SK-N-SH (cell line): ENCODE measurements at regions of chrX and their contacts with region 1.

Region 1: GRCh38 chrX:19017271-19017670 is 33.4 kb upstream of the PHKA2 start:
- DNase-seq: peak; percentile 73
- H3K4me3 ChIP-seq: no peak overlapping the region
- H3K27ac ChIP-seq: no peak overlapping the region
- H3K4me1 ChIP-seq: no peaks in the 10 kb centered on the region
- H3K27me3 ChIP-seq: no peaks in the 10 kb centered on the region
- CTCF ChIP-seq: peak; percentile 69
- EP300 ChIP-seq: no peak
- RAD21 ChIP-seq: peak; percentile 78

Region 2: DNA sequence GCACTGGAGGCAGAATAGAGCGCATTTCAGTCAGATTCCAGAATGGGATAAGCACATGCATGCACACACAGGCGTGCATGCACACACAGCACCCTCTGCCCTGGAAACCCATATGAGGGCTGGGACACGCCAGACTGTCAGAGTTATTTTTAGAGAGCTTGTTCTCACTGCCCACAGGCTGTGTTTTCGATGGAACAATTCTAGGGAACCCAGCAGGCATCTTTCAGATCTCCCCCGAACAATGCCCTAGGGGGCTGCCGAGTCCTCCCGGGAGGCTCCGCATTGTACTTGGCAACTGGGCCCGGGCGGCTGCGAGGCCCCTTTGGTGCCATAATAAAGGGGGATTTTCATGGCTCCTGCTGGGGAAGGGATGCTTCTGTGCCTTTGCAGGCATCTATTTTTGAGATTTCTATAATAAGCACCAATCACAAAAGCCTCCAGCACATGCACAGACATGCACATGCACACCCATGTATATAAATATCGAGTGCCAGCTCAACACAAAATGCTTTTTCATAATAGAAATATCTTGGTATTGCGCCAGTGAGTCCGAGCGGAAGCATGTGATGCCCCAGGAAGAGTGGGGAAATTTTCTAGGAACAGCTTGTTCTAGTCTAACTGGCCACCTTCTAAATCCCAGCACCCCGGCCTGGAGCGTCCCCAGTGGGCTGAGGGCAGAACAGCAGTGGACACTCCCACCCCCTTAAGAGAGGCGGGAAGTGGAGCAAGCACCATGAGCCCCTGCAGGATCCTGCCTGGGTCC is 121.9 kb before region 1 on chrX:
- CTCF ChIA-PET with region 1: no interaction called
- POLR2A ChIA-PET with region 1: no interaction called
- DNase-seq: peak; percentile 49
- H3K4me3 ChIP-seq: no peak overlapping the region
- H3K27ac ChIP-seq: peak overlapping the region in 1 of 2 experiments; percentile 34; a peak in 1 of 4 replicates
- H3K4me1 ChIP-seq: peaks cover 0 to 38% of the 10 kb centered on the region in 2 experiments; a peak in 1 of 4 replicates
- H3K27me3 ChIP-seq: peaks cover 5% of the 10 kb centered on the region; the same call in 1 of the 2 replicates
- CTCF ChIP-seq: no peak
- EP300 ChIP-seq: no peak
- RAD21 ChIP-seq: no peak

Region 3: DNA sequence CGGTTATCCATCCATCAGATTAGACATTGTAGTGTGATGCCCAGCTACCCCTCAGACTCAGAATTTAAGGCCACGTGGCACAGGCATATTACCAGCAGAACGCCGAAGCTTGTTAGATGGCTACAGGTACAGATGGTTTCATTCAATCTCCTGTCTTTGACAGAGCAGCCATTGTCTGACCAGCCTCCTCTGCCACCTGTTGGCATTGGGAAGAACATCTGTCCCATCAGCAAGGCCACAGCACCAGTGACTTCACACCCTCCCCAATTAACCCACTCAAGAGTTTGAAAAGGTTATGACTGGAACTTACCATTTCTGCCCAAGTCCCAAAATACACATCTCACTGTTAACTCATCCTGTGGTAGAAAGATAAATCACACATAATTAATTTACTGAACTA is 11.4 kb before region 1 on chrX:
- CTCF ChIA-PET with region 1: interaction called, 52 read pairs
- POLR2A ChIA-PET with region 1: no interaction called
- DNase-seq: peak; percentile 14
- H3K4me3 ChIP-seq: no peak overlapping the region
- H3K27ac ChIP-seq: no peak overlapping the region
- H3K4me1 ChIP-seq: no peaks in the 10 kb centered on the region
- H3K27me3 ChIP-seq: no peaks in the 10 kb centered on the region
- CTCF ChIP-seq: no peak
- EP300 ChIP-seq: no peak
- RAD21 ChIP-seq: peak; percentile 25; the same call in 1 of the 2 replicates

Region 4: GRCh38 chrX:19030805-19031204 is 13.5 kb after region 1 on chrX:
- CTCF ChIA-PET with region 1: interaction called, 16 read pairs
- POLR2A ChIA-PET with region 1: no interaction called
- DNase-seq: no peak
- H3K4me3 ChIP-seq: no peak overlapping the region
- H3K27ac ChIP-seq: no peak overlapping the region
- H3K4me1 ChIP-seq: no peaks in the 10 kb centered on the region
- H3K27me3 ChIP-seq: no peaks in the 10 kb centered on the region
- CTCF ChIP-seq: no peak
- EP300 ChIP-seq: no peak
- RAD21 ChIP-seq: no peak

Region 5: GRCh38 chrX:19040373-19040772 is 23.1 kb after region 1 on chrX:
- CTCF ChIA-PET with region 1: interaction called, 30 read pairs
- POLR2A ChIA-PET with region 1: no interaction called
- DNase-seq: no peak
- H3K4me3 ChIP-seq: no peak overlapping the region
- H3K27ac ChIP-seq: no peak overlapping the region
- H3K4me1 ChIP-seq: no peaks in the 10 kb centered on the region
- H3K27me3 ChIP-seq: no peaks in the 10 kb centered on the region
- CTCF ChIP-seq: peak; percentile 66
- EP300 ChIP-seq: no peak
- RAD21 ChIP-seq: peak; percentile 46; the same call in 1 of the 2 replicates

Region 6: DNA sequence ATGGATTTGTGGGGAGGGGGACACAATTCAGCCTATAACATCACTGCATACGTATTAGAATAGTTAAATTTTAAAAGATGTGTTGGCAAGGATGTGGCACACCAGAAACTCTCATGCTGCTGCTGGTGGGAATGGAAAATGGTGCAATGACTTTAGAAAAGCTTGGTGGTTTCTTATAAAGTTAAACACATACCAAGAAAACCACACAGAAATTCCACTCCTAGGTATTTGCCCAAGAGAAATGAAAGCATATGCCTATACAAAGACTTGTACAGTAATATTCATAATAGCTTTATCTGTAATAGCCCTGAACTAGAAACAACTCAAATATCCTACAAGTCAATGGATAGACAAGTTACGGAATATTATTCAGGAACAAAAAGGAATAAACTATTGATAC is 255.2 kb after region 1 on chrX:
- CTCF ChIA-PET with region 1: no interaction called
- POLR2A ChIA-PET with region 1: no interaction called
- DNase-seq: no peak
- H3K4me3 ChIP-seq: no peak overlapping the region
- H3K27ac ChIP-seq: no peak overlapping the region
- H3K4me1 ChIP-seq: no peaks in the 10 kb centered on the region
- H3K27me3 ChIP-seq: no peaks in the 10 kb centered on the region
- CTCF ChIP-seq: no peak
- EP300 ChIP-seq: no peak
- RAD21 ChIP-seq: no peak